Brain microvascular endothelial cell (primary cell): ENCODE measurements at regions of chr16 and their contacts with region 1.

Region 1: GRCh38 chr16:84617791-84618580 is at the start of gene COTL1:
- DNase-seq: peak; percentile 97
- H3K4me3 ChIP-seq: peak within 1 kb of the TSS; percentile 82
- H3K27ac ChIP-seq: peak within 1 kb of the TSS; percentile 67
- H3K27me3 ChIP-seq: no peaks in the 10 kb centered on the region
- CTCF ChIP-seq: no peak

Region 2: DNA sequence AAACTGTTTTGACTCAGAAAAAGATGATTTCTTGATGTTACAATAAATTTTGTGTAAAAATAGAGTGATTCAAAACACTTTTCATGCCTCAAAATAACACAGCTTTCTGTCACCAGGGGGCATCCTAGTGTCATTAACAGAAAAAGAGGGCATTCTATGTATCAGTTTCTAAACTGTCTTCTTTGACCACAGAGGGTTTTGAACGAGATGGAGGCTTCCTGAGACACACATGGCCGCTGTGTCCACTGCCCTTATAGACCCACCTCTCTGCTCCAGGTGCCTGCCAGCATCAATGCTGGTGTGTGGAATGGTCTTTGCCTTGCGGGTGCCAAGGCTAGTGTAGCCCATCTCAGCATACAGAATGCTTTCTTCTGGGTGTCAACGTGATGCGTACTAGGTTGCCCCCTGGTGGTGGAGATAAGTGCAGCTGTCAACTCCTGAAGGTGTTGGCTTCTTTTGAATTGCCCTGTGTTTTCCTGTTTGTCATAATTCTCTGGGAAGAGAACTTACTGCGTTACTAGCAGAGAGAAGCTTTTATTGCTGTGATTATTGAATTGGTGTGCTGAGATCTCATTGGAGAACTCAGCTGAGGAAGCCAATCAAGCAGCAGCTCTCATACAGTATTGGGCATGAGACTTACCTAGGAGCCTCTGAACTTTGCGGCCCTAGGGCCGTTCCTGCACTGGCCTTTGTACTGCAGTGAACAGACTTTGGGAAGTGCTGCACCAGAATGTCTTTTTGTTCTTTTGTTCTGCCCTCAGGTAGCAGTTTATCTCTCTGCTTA is 120.5 kb after region 1 on chr16:
- in situ Hi-C with region 1: loop called (anchors 25 kb)
- DNase-seq: peak; percentile 82
- H3K4me3 ChIP-seq: no peak overlapping the region
- H3K27ac ChIP-seq: peak overlapping the region; percentile 84
- H3K27me3 ChIP-seq: no peaks in the 10 kb centered on the region
- CTCF ChIP-seq: peak; percentile 91